CD8-positive, alpha-beta T cell (primary cell): ENCODE measurements at regions of chr12 and their contacts with region 1.

Region 1: GRCh38 chr12:114508529-114509129 is 102.7 kb upstream of the TBX5 start:
- DNase-seq: peak; percentile 16 to 69 (median 50)
- ATAC-seq: no peak
- H3K4me3 ChIP-seq: no peak overlapping the region
- H3K4me3 Mint-ChIP-seq: no peak overlapping the region
- H3K27ac ChIP-seq: no peak overlapping the region
- H3K27ac Mint-ChIP-seq: no peak overlapping the region
- H3K4me1 ChIP-seq: no peaks in the 10 kb centered on the region
- H3K4me1 Mint-ChIP-seq: no peaks in the 10 kb centered on the region
- H3K27me3 ChIP-seq: no peaks in the 10 kb centered on the region
- H3K27me3 Mint-ChIP-seq: peaks cover 15% of the 10 kb centered on the region
- CTCF ChIP-seq: peak; percentile 63

Region 2: GRCh38 chr12:113462117-113462774 is 1046.4 kb before region 1 on chr12:
- CTCF ChIA-PET with region 1: no interaction called
- POLR2A ChIA-PET with region 1: no interaction called
- intact Hi-C with region 1: loop called in 1 of 2 experiments (anchors 5 kb)
- DNase-seq: peak; percentile 36 to 76 (median 65)
- ATAC-seq: peak; percentile 71
- H3K4me3 ChIP-seq: peak overlapping the region; percentile 22 to 35
- H3K4me3 Mint-ChIP-seq: peak overlapping the region; percentile 85
- H3K27ac ChIP-seq: no peak overlapping the region
- H3K27ac Mint-ChIP-seq: no peak overlapping the region
- H3K4me1 ChIP-seq: peaks cover 22% of the 10 kb centered on the region
- H3K4me1 Mint-ChIP-seq: peaks cover 25% of the 10 kb centered on the region
- H3K27me3 ChIP-seq: peaks cover 20 to 23% of the 10 kb centered on the region in 2 experiments
- H3K27me3 Mint-ChIP-seq: peaks cover 61% of the 10 kb centered on the region
- CTCF ChIP-seq: peak; percentile 66